ENCODE measurements at regions of chr10 and their contacts with region 1.

Region 1: GRCh38 chr10:79249186-79250121 is 97.8 kb upstream of the PPIF start:
- DNase-seq: peak; percentile 68
- ATAC-seq: peak; percentile 57
- H3K4me3 Mint-ChIP-seq: peak overlapping the region; percentile 79
- H3K27ac Mint-ChIP-seq: peak overlapping the region; percentile 98
- H3K4me1 Mint-ChIP-seq: peaks cover 100% of the 10 kb centered on the region
- H3K27me3 Mint-ChIP-seq: no peaks in the 10 kb centered on the region
- CTCF ChIP-seq: no peak

Region 2: DNA sequence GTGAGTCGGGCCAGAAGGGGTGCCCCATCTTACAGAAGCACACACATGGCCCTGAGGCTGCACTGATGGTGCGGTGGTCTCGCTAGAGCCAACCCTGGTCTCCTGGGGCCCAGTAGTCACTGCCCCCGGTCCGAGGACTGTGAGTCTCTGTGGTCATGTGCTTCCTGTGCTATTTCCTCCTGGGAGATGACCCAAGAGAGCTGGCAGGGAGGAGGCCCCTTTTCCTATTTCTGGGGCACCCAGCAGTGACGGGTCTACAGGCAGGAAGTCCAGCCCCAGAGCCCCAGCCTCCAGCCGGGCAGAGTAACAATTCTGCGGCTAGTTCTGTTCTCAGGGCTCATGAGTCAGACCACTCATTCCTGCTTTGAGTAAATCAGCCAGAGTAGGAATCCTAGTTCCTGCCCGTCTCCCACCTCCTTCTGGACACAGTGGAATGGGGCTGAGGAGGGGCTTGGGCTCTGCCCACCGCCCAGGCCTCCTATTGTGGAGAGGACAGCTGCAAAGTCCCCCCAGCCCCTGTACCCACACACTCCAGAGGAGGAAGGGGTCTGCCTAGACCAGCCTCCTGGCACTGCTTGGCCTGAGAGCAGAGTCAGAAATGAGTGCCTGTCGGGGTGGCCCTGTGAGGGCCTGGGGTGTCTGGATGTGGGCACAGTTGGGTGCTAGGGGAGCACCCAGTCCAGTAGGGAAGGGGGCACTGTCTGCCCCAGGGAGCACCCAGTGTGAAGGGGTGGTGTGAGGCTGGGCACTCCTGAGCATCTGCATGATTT is 17.3 kb after region 1 on chr10:
- CTCF ChIA-PET with region 1: interaction called, 4 read pairs
- POLR2A ChIA-PET with region 1: interaction called, 311 read pairs
- intact Hi-C with region 1: loop called (anchors 1 kb)
- DNase-seq: peak; percentile 40
- ATAC-seq: peak; percentile 68
- H3K4me3 Mint-ChIP-seq: peak overlapping the region; percentile 69
- H3K27ac Mint-ChIP-seq: peak overlapping the region; percentile 92
- H3K4me1 Mint-ChIP-seq: peaks cover 96% of the 10 kb centered on the region
- H3K27me3 Mint-ChIP-seq: no peaks in the 10 kb centered on the region
- CTCF ChIP-seq: no peak

Region 3: DNA sequence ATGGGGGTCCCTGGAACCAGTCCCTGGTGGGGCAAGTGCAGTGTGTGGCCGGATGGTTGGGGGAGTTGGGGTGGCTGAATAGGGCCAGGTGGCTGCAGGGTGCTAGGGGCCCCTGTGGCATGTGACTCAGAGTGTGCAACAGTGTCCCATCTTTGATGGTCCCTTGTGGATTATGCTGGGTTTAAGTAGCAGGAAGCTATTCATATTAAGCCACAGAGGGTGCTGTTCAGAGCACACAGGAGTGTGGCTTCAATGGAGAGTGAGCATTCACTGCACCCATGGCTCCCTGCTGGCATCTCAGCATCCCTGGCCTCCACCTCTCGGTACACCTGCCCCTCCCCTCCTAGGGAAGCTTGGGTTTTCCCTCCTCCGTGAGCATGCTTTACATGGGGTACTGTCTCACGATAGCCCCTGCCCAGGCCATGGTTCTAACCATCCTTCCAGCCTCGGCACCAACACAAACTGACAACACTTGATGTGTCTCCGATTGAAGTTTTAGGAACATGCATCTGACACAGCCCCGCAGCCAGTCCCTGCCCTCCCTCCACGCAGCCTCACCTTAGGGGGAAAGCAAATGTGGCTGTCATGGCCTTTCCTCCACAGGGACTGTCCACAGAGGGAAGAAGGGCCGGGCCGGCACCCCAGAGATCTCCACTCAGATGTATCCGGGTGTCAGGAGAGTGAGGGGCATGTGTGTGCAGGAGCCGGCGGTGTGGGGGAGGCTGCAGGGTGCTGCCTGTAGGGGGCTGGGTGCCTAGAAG is 67.4 kb after region 1 on chr10:
- CTCF ChIA-PET with region 1: no interaction called
- POLR2A ChIA-PET with region 1: interaction called, 32 read pairs
- intact Hi-C with region 1: loop called (anchors 1 kb)
- DNase-seq: peak; percentile 39
- ATAC-seq: peak; percentile 89
- H3K4me3 Mint-ChIP-seq: peak overlapping the region; percentile 48
- H3K27ac Mint-ChIP-seq: peak overlapping the region; percentile 56
- H3K4me1 Mint-ChIP-seq: peaks cover 43% of the 10 kb centered on the region
- H3K27me3 Mint-ChIP-seq: no peaks in the 10 kb centered on the region
- CTCF ChIP-seq: no peak

Region 4: DNA sequence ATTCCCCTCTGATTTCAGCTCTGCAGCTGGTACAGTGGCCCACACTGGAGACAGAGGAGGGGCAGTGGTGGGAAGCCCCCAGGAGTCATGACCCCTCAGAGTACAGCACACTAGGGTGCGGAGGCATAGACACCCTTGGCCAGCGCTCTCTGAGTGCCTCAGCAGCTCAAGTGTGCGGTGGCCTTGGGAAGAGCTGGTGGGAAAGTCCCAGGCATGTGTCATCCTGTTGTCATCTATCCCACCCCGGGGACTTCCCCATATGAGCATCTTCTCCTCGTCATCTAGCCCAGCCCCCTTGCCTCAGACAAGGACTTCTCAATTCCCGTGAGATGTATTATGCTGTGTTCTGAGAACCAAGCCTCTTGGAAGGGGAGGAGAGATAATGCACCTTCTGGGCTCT is 82.3 kb after region 1 on chr10:
- CTCF ChIA-PET with region 1: interaction called, 3 read pairs
- POLR2A ChIA-PET with region 1: interaction called, 22 read pairs
- intact Hi-C with region 1: loop called (anchors 2 kb)
- DNase-seq: peak; percentile 57
- ATAC-seq: peak; percentile 93
- H3K4me3 Mint-ChIP-seq: peak overlapping the region; percentile 41
- H3K27ac Mint-ChIP-seq: peak overlapping the region; percentile 79
- H3K4me1 Mint-ChIP-seq: peaks cover 24% of the 10 kb centered on the region
- H3K27me3 Mint-ChIP-seq: no peaks in the 10 kb centered on the region
- CTCF ChIP-seq: no peak

Region 5: GRCh38 chr10:79445141-79445976 is 195.9 kb after region 1 on chr10 and contains the start of gene ZCCHC24:
- CTCF ChIA-PET with region 1: no interaction called
- POLR2A ChIA-PET with region 1: interaction called, 10 read pairs
- intact Hi-C with region 1: loop called (anchors 2 kb)
- DNase-seq: peak; percentile 92
- ATAC-seq: peak; percentile 93
- H3K4me3 Mint-ChIP-seq: peak within 1 kb of the TSS; percentile 87
- H3K27ac Mint-ChIP-seq: peak within 1 kb of the TSS; percentile 50
- H3K4me1 Mint-ChIP-seq: peaks cover 26% of the 10 kb centered on the region
- H3K27me3 Mint-ChIP-seq: peaks cover 2% of the 10 kb centered on the region
- CTCF ChIP-seq: no peak
- total RNA-seq, gene ZCCHC24: 1.1 and 1.3 TPM in 2 replicates

Measured in activated B cell treated with CpG ODN at 0.5 μM for 24 hours (primary cell).